Right ventricle myocardium inferior (tissue), 1 donor: ENCODE measurements at regions of chr1 and their contacts with region 1.

Region 1: DNA sequence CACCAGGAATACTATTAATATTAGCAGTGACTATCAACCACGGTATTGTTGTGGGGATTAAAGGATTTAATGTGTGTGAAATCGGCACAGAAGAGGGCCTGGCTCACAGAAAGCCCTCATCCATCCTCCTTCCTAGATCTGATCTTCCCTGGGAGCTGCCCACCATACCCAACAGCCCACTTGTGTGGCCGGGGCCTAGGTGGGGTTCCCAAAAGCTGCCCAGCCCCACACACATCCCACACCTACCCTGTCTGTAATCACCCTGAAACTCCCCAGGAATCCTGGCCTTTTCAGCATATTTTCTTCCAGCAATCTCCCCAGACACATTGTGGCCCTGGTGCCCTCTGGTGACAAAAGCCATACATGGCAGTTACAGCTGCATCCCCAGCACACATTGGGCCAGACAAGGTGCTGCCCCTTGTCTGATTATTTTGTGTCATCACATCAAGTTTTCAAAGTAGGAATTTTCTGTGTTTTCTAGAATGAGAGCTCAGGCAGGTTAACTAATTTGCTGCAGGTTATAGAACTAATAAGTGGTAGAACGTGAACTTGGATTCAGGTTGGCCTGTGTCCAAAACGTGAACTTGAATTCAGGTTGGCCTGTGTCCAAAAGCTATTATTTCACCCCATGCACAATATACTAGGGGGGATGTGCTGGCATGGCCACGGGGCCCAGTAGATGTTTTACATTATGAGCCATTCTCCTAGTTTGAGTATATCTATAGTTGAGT is 5.3 kb upstream of the SLC6A9 start:
- DNase-seq: no peak
- ATAC-seq: peak; percentile 60

Region 2: DNA sequence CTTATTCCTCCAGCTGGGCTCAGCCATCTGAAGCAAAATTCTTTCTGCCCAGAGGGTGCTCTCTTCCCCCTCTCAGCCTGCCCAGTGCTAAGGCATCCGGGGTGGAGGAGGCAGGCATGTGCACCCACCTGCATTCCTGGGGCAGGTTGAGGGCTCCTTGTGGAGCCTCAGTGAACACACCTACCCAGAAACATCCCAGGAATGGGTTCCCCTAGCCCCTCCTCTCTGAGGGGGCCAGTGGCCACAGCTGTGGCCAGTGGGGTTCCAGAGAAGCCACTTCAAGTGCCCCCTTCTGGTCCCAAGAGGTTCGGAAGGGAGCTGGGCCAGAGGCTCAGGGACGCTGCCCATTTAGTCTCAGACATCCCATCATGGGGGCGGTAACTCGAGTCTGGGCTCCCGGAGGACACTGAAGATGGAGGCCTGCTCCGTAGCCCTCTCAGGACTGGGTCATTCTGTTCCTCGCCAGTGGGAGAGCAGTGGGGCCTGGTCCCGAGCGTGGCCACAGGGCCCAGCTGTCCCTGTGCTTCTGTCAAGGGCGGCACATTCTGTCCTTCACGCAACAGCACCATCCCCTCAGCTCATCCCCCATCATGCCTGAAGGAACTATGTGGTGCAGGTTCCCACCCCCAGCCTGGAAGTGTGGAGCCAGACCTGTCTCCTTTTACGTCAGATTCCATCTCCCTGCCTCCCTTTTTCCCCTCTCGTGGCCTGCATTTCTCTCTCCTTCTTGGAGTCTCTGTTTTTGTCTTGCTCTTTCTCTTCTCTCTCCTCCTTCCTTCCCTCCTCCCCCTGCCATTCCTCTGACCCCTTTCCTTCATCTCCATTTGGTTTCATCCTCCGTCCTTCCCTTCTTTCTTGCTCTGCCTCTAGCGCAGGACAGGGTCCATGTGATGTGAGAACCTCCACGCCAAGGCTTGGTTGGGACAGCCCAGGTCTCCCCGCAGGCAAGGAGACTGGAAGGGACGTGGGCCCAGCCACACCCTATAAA is 436.2 kb before region 1 on chr1:
- intact Hi-C with region 1: no loop called
- DNase-seq: no peak
- ATAC-seq: no peak

Region 3: DNA sequence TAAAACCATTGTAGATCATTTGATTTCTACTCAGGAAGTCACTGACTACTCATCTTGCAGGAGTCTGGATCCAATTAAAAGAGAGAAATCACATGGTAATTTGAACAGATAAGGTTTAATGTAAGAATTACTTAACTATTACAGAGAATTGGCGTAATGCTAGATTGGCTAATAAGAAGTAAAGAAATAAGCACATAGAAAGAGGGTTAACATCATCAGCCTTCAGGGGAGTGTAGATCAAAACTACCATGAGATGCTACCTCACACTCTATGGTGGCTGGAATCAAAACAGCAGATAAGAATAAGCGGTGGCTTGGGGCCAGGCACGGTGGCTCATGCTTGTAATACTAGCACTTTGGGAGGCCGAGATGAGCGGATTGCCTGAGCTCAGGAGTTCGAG is 317.5 kb before region 1 on chr1:
- intact Hi-C with region 1: no loop called
- DNase-seq: no peak
- ATAC-seq: no peak

Region 4: GRCh38 chr1:44002606-44003157 is 33.9 kb before region 1 on chr1:
- intact Hi-C with region 1: loop called (anchors 1 kb)
- DNase-seq: no peak
- ATAC-seq: no peak